Transverse colon (tissue), 4 donors: ENCODE measurements at regions of chr4 and their contacts with region 1.

Region 1: DNA sequence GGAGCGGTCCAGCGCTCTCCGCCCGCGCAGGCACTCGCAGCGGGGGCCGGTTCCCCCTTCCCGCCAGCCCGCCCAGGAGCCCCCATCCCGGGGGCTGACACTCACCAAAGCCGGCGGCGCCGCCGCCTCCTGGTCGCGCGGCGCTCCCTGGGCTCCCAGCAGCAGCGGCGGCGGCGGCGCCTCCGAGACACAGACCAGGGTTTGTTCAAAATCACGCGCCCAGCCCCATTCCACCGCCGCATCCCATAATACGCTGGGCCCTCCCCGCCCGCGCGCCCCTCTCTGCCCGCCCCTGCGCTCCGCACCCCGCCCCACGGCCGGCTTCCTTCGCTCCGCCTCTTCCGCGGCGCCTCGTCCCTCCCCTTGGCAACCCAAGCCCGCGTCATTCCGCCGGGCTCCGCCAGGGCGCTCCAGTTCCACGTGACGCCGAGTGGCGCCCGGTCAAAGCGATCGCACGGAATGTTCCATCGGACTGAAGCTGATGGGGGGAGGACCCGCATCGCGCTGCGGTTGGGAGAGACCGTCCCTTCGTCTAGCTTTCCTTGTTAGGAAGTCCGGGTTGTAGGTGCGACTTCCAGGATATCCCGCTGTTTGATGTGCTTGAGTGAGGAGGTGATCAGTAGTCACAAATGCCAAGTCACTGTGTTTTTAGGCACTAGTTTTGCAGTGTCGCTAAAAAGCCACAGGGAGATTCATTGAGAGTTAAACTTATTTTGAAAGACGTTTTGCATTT is 2.2 kb upstream of the LIN54 start:
- DNase-seq: peak; percentile 99
- H3K4me3 ChIP-seq: peak overlapping the region; percentile 87 to 98 (median 92)
- H3K27ac ChIP-seq: peak overlapping the region; percentile 95 to 98 (median 97)
- H3K4me1 ChIP-seq: peaks cover 18 to 29% (median 29%) of the 10 kb centered on the region in 4 donors
- H3K27me3 ChIP-seq: no peaks in the 10 kb centered on the region
- CTCF ChIP-seq: peak; percentile 45 to 89 (median 66)
- EP300 ChIP-seq: peak; percentile 53
- POLR2A ChIP-seq: peak; percentile 66

Region 2: DNA sequence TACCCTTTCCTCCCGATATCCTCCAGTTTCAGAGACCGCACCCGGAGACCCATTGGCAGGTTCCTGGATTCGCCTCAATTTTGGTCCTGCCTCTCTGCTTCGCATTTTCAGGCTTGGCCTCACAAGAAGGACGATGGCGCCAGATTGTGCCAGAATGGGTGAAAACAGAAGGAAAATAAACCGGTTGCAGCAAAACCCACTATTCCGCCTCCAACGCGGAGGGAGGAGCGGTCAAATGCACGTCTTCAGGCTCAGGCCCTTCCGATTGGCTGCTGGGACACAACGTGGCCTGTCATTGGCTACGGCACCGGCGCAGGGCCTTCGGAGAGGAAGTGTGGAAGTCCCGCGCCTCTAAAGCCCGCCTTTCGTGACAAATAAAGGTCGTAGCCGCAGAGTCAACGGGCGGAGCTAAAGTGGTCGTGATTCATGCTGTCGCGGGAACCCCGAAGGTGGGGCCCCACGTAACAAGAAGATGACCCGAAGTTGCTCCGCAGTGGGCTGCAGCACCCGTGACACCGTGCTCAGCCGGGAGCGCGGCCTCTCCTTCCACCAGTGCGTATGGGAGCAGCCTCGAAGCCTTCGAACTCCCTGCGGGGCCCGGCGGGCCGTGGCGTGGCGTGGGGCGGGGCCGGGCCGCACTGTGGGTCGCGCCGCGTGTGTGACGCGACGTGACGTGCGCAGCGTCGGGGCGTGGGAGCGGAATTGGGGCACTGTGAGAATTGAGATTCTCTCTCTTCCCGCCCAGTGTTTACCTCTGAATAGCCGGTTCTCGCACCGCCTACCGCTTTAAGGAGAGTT is 112.3 kb before region 1 on chr4 and contains the start of gene THAP9:
- in situ Hi-C with region 1: loop called in 1 of 4 experiments (anchors 10 kb)
- intact Hi-C with region 1: loop called (anchors 5 kb)
- DNase-seq: peak; percentile 98
- H3K4me3 ChIP-seq: peak within 1 kb of the TSS; percentile 57 to 82 (median 68)
- H3K27ac ChIP-seq: peak within 1 kb of the TSS; percentile 95 to 99 (median 98)
- H3K4me1 ChIP-seq: peaks cover 15 to 30% (median 22%) of the 10 kb centered on the region in 4 donors
- H3K27me3 ChIP-seq: no peaks in the 10 kb centered on the region
- CTCF ChIP-seq: no peak
- EP300 ChIP-seq: no peak
- POLR2A ChIP-seq: peak; percentile 94
- total RNA-seq, gene THAP9: 3.7 to 7.3 (median 5.6) TPM